ENCODE measurements at regions of chr1 and their contacts with region 1.

Region 1: GRCh38 chr1:16904560-16905111 is 8.9 kb downstream of the RNU1-2 start:
- DNase-seq: peak; percentile 97 to 99 (median 98)
- H3K4me3 ChIP-seq: peak overlapping the region; percentile 45 to 79 (median 57)
- H3K4me3 Mint-ChIP-seq: no peak overlapping the region
- H3K27ac ChIP-seq: peak overlapping the region; percentile 87 to 99
- H3K27ac Mint-ChIP-seq: no peak overlapping the region
- H3K4me1 ChIP-seq: peaks cover 22 to 40% of the 10 kb centered on the region in 2 donors
- H3K4me1 Mint-ChIP-seq: peaks cover 22% of the 10 kb centered on the region
- H3K27me3 ChIP-seq: no peaks in the 10 kb centered on the region
- H3K27me3 Mint-ChIP-seq: peaks cover 0 to 6% (median 2%) of the 10 kb centered on the region in 3 donors
- CTCF ChIP-seq: no peak

Region 2: DNA sequence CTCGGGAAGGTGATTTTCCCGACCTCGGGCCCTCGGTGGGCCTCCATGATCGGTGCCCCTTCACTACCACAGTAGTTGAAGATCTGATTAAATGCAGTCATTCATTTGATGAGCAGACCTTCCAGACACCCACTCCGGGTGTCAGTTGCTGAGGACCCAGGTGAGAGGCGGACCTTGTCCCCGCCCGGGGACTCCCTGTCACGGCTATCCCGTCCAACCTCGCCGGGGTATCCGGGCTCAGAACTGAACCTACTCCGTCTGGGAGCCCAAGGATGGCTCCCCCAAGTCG is 260.5 kb before region 1 on chr1:
- intact Hi-C with region 1: loop called in 1 of 2 experiments (anchors 10 kb)
- DNase-seq: no peak
- H3K4me3 ChIP-seq: peak overlapping the region; percentile 53 to 87 (median 65)
- H3K4me3 Mint-ChIP-seq: no peak overlapping the region
- H3K27ac ChIP-seq: peak overlapping the region; percentile 37 to 86
- H3K27ac Mint-ChIP-seq: no peak overlapping the region
- H3K4me1 ChIP-seq: peaks cover 28 to 29% of the 10 kb centered on the region in 2 donors
- H3K4me1 Mint-ChIP-seq: no peaks in the 10 kb centered on the region
- H3K27me3 ChIP-seq: peaks cover 0 to 18% of the 10 kb centered on the region in 2 donors
- H3K27me3 Mint-ChIP-seq: peaks cover 14 to 28% (median 18%) of the 10 kb centered on the region in 3 donors
- CTCF ChIP-seq: no peak

Region 3: GRCh38 chr1:17027403-17027802 is 122.8 kb after region 1 on chr1:
- intact Hi-C with region 1: no loop called
- DNase-seq: no peak
- H3K4me3 ChIP-seq: no peak overlapping the region
- H3K4me3 Mint-ChIP-seq: no peak overlapping the region
- H3K27ac ChIP-seq: peak overlapping the region; percentile 18 to 38
- H3K27ac Mint-ChIP-seq: peak overlapping the region in 5 of 7 donors; percentile 24 to 64 (median 53)
- H3K4me1 ChIP-seq: peaks cover 21 to 28% of the 10 kb centered on the region in 2 donors
- H3K4me1 Mint-ChIP-seq: peaks cover 36% of the 10 kb centered on the region
- H3K27me3 ChIP-seq: no peaks in the 10 kb centered on the region
- H3K27me3 Mint-ChIP-seq: no peaks in the 10 kb centered on the region
- CTCF ChIP-seq: no peak